ENCODE measurements at regions of chr6 and their contacts with region 1.

Region 1: GRCh38 chr6:3748208-3749066 is 3.1 kb downstream of the PXDC1 start:
- DNase-seq: peak in 1 of 4 donors; percentile 69
- ATAC-seq: peak; percentile 26
- H3K4me3 ChIP-seq: peak overlapping the region in 1 of 2 donors; percentile 66
- H3K27ac ChIP-seq: peak overlapping the region; percentile 92 to 98
- H3K4me1 ChIP-seq: peaks cover 14 to 78% of the 10 kb centered on the region in 2 donors
- H3K27me3 ChIP-seq: peaks cover 0 to 43% of the 10 kb centered on the region in 2 donors
- CTCF ChIP-seq: peak; percentile 43

Region 2: DNA sequence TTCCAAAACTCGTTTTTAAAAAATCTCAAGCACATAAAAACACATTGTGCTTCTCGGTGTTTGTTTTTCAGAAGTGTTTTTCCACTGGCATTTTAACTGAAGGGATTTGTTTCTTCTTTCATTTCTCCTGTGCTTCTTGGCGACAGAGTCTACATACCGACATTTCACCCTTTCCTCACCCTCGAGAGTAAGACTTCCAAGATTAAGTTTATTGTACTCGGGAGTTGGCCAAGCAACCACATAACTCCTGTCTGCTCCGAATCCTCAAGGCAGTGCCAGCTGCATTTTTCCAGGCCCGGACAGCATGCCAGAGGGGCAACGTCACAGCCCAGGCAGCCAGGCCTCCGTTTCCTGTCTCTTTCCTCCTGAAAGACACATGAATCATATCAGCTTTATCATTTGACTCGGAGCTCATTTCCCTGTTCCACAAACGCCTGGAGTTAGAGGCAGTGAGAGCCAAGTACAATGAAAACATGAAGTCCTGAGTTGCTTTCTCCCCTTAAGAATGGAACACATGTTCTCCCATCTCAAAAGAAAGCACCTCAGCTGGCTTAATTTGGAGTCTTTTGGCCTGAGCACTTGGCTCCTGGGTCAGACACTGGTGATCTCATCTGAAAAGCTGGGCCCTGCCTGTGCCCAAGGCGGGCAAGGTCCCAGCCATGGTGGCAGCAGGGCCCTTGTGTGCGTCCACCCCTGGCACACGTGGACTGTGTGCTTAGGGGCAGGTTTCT is 77.6 kb after region 1 on chr6:
- intact Hi-C with region 1: loop called in 1 of 2 experiments (anchors 5 kb)
- DNase-seq: peak; percentile 80 to 91 (median 86)
- ATAC-seq: peak; percentile 94
- H3K4me3 ChIP-seq: no peak overlapping the region
- H3K27ac ChIP-seq: peak overlapping the region; percentile 90 to 91
- H3K4me1 ChIP-seq: peaks cover 11 to 21% of the 10 kb centered on the region in 2 donors
- H3K27me3 ChIP-seq: no peaks in the 10 kb centered on the region
- CTCF ChIP-seq: no peak

Region 3: DNA sequence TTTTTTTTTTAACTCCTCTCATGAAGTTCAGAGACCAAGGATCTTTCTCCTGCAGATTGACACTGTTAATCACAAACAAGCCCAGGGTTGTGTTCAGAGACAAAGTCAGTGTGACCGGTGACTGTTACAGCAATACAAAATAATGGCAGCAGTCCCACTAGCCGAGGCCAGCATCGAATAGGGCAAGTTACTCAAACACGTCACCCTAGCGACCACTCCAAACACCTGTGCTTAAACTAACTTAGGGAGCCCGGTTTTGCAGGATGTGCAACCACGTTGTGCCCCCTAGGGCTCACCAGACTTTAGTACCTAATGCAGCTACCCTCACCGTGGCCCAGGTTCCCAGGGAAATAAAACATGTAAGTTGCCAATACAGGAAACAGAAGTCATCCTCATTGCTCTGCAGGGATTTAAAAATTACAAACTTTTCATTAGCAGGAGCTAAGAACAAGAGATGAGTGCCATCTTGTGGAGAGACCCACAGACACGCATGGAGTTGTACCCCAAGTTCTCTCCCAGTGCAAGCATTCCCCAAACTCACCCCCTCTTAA is 138.8 kb after region 1 on chr6:
- intact Hi-C with region 1: loop called in 1 of 2 experiments (anchors 5 kb)
- DNase-seq: peak in 1 of 4 donors; percentile 30
- ATAC-seq: peak; percentile 55
- H3K4me3 ChIP-seq: no peak overlapping the region
- H3K27ac ChIP-seq: no peak overlapping the region
- H3K4me1 ChIP-seq: no peaks in the 10 kb centered on the region
- H3K27me3 ChIP-seq: no peaks in the 10 kb centered on the region
- CTCF ChIP-seq: peak; percentile 31 to 34